ENCODE measurements at regions of chr11 and their contacts with region 1.

Region 1: DNA sequence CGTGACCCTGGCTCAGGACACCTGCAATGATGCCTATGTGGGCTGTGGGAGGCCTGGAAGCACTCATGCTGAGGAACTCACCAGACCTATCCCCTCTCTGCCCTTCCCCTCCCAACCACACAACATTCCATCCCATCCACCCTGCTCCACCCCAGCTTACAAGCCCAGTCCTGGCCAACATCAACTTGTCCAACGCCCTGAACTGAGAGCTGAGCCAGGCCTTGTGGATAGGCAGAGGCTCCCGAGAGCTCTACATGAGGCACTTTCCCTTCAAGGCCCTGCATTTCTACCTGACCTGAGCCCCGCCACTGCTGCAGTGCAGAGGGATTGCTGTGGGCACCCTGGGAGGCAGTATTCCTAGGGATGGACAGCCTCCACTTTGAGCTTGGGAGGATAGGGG is 112.4 kb downstream of the PDE2A start:
- DNase-seq: no peak
- H3K4me3 ChIP-seq: no peak overlapping the region
- H3K27ac ChIP-seq: no peak overlapping the region
- H3K4me1 ChIP-seq: no peaks in the 10 kb centered on the region
- H3K27me3 ChIP-seq: no peaks in the 10 kb centered on the region
- CTCF ChIP-seq: no peak

Region 2: DNA sequence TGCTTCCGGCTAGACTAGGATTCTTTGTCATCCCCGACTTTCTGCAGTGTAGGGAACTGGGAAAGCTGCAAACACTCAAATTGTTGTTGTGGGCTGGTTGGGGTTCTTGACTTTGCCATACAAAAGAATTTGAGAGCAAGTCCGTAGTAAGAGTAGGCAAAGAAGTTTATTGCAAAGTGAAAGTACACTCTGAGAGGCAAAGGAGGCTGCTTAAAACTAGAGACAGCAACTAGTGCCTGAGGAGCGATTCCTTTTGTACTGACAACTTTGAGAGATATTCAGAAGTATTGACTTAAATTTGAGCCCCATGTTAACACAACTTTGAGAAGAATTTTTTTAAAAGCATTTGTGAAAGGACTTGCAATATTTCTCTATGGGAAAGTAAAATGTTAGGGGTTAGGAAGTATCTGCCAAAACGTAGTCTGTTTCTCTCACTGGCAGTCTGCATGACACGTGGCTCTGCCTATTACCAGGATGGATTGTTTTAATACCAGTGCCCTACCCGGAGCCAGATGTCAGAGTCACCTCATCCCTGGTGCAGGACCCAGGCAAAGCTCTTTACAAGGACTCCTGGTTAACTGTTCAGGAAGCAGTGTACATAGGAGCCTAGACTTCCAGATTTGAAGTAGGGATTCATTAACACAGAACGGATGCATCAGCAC is 42.5 kb before region 1 on chr11:
- CTCF ChIA-PET with region 1: interaction called, 10 read pairs
- POLR2A ChIA-PET with region 1: no interaction called
- intact Hi-C with region 1: no loop called
- DNase-seq: no peak
- H3K4me3 ChIP-seq: no peak overlapping the region
- H3K27ac ChIP-seq: no peak overlapping the region
- H3K4me1 ChIP-seq: no peaks in the 10 kb centered on the region
- H3K27me3 ChIP-seq: 0 out of 2 replicates have a peak, but pooled peaks cover 7% of the 10 kb centered on the region
- CTCF ChIP-seq: no peak